ENCODE measurements at regions of chr5 and their contacts with region 1.

Region 1: DNA sequence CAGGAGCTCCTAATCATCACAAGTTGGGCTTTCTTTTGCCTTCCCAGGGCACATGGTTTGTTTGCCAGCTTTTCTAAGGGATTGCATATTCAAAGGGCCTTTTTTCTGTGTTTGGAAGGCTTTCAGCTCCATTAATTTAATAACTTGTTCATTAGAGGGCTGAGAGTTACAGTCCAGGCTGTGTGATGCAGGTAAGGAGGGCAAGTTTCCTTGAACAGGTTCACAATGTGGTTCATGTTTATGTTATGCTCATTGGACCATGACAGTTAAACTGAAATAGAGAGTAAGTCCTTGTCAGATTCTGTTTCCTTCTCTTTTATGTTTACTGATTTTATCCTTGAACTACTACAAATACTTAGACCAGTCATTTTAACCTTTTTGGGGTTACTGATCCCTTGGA is 174.4 kb downstream of the MARCHF11 start:
- DNase-seq: no peak
- ATAC-seq: no peak

Region 2: DNA sequence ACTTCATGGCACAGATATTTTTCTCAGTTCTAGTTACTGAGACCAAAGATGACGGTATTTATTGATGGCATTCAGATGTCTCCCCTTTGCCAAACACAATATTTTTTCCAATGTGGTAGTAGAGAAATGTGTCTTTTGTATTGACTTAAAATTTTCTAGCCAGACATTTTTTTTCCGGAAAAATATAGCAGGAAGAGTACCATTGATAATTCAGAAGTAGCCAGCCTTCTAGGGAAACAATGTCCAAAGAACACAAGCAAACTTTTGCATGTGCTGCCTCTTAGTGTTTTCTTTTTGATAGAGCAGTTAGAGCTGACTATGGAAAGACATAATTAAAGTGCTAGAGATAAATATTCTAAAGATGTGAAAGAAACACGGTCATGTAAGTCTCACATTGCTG is 57.0 kb before region 1 on chr5:
- intact Hi-C with region 1: no loop called
- DNase-seq: no peak
- ATAC-seq: no peak

Region 3: GRCh38 chr5:16025681-16026080 is 20.5 kb after region 1 on chr5:
- intact Hi-C with region 1: no loop called
- DNase-seq: no peak
- ATAC-seq: no peak

Region 4: DNA sequence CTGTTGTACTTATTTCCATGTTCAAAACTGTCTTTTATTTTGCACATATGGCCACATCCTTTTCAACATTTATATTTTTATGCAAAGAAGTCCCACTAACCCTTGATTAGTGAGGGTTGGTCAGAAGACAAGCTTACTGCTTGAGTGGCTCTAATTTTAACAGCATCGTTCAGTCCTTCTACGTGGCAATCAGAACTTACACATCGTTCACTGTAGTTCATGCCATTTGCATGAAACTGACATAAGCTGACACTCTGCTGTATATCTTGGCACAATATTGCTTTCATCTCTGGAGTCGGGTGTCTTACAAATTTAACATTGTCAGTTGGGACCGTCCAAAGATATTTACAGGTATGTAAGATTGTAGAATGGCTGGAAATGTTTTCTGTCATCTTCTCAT is 123.7 kb after region 1 on chr5:
- intact Hi-C with region 1: loop called (anchors 5 kb)
- DNase-seq: no peak
- ATAC-seq: peak; percentile 49